Activated naive CD4-positive, alpha-beta T cell treated with anti-CD3 and anti-CD28 coated beads, Interleukin-2, amount 10 ng/mL, durations not matched to agents 7 days and 5 days (primary cell): ENCODE measurements at regions of chr7 and their contacts with region 1.

Region 1: DNA sequence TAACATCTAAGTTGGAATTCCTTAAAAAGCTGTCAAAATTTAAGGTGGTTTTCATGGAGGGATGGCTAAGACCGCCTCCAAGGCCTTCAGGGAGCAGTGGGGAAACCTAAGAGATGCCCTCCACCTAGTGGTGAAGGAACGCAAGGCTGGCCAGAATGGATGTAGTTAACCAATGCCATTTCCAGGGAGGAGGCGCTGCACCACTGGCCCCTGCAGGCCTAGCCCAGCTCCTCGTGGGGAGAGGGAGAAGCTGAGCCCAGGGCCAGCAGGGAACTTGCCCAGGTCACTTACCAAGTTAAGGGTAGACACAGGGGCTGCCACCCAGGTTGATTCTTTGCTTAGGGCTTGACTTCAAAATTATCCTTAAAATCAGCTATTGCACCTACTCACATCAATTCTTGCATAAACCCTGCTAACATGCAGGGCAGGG is 32.0 kb downstream of the FIGNL1 start:
- DNase-seq: peak; percentile 83
- H3K4me3 Mint-ChIP-seq: no peak overlapping the region
- H3K27ac Mint-ChIP-seq: no peak overlapping the region
- H3K4me1 Mint-ChIP-seq: peaks cover 34% of the 10 kb centered on the region
- H3K27me3 Mint-ChIP-seq: peaks cover 16% of the 10 kb centered on the region

Region 2: GRCh38 chr7:50092579-50093491 is 325.3 kb before region 1 on chr7 and contains the start of gene ZPBP:
- CTCF ChIA-PET with region 1: interaction called, 39 read pairs
- DNase-seq: peak; percentile 58
- H3K4me3 Mint-ChIP-seq: peak within 1 kb of the TSS; percentile 75
- H3K27ac Mint-ChIP-seq: peak within 1 kb of the TSS; percentile 75
- H3K4me1 Mint-ChIP-seq: peaks cover 5% of the 10 kb centered on the region
- H3K27me3 Mint-ChIP-seq: peaks cover 3% of the 10 kb centered on the region

Region 3: DNA sequence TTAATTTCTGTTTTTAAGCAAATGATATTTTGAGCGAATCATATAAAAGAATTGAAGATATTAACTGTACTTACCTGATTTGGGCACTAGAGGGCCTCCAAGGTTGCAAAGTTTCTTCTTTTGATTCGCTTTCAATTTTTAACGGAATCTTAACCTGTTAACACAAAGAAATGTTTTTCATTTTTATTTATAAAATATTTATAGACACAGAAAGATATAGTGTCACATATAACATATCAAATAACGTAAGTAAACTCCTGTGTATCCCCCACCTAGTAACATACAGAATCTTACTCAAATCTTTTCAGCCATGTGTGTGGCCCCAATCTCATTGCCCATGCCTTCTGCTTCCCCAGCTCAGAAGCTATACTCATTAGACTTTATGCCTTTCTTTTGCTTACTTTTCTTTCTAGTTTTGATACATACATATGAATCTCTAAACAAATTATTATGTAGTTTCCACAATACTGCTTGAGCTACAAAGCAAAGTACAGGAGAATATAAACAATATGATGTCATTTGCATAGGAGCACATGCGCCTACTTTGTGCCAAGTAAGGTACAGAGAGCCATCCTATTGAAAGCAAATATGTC is 275.6 kb before region 1 on chr7:
- CTCF ChIA-PET with region 1: interaction called, 111 read pairs
- DNase-seq: peak; percentile 55
- H3K4me3 Mint-ChIP-seq: peak overlapping the region; percentile 40
- H3K27ac Mint-ChIP-seq: peak overlapping the region; percentile 47
- H3K4me1 Mint-ChIP-seq: peaks cover 48% of the 10 kb centered on the region
- H3K27me3 Mint-ChIP-seq: peaks cover 12% of the 10 kb centered on the region

Region 4: GRCh38 chr7:50397320-50397970 is 20.7 kb before region 1 on chr7:
- CTCF ChIA-PET with region 1: interaction called, 30 read pairs
- DNase-seq: peak; percentile 48
- H3K4me3 Mint-ChIP-seq: peak overlapping the region; percentile 25
- H3K27ac Mint-ChIP-seq: peak overlapping the region; percentile 78
- H3K4me1 Mint-ChIP-seq: peaks cover 78% of the 10 kb centered on the region
- H3K27me3 Mint-ChIP-seq: no peaks in the 10 kb centered on the region

Region 5: GRCh38 chr7:50446542-50446960 is 28.4 kb after region 1 on chr7:
- CTCF ChIA-PET with region 1: interaction called, 10 read pairs
- DNase-seq: no peak
- H3K4me3 Mint-ChIP-seq: no peak overlapping the region
- H3K27ac Mint-ChIP-seq: no peak overlapping the region
- H3K4me1 Mint-ChIP-seq: peaks cover 61% of the 10 kb centered on the region
- H3K27me3 Mint-ChIP-seq: no peaks in the 10 kb centered on the region